ENCODE measurements at regions of chrX and their contacts with region 1.

Region 1: GRCh38 chrX:41802958-41803357 is 79.0 kb downstream of the GPR82 start:
- DNase-seq: no peak
- ATAC-seq: no peak
- H3K4me3 ChIP-seq: no peak overlapping the region
- H3K4me3 Mint-ChIP-seq: no peak overlapping the region
- H3K27ac ChIP-seq: no peak overlapping the region
- H3K27ac Mint-ChIP-seq: peak overlapping the region in 1 of 9 donors; percentile 3
- H3K4me1 ChIP-seq: peaks cover 0 to 3% of the 10 kb centered on the region in 2 donors
- H3K4me1 Mint-ChIP-seq: peaks cover 5 to 45% (median 16%) of the 10 kb centered on the region in 7 donors
- H3K27me3 ChIP-seq: no peaks in the 10 kb centered on the region
- H3K27me3 Mint-ChIP-seq: no peaks in the 10 kb centered on the region

Region 2: DNA sequence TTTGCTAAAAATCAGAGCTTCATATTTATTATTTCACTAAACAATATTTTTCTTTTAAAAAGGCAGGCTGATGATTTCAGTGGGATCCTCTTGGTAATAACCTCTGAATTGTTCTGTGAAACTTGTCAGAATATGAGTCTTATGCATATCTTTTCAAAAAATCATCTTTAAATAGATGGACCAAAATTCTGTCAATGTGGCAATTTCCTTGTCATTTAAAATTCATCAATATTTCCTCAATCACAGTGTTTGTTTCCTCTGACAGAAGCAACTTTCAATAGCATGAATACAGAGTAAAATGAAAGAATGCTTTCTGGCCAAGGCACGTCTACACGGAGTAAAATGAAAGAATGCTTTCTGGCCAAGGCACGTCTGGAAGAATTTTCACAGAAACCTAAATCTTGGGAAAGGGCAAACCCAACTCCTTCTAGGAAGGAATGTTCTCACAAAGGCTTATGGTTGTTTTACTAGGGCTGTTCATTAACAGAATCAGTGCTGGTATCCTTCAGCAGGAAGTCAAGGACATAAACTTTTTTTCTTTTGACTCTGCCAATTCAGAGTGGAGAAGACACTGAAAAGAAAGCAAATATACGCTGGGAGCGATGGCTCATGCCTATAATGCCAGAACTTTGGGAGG is 213.2 kb before region 1 on chrX:
- CTCF ChIA-PET with region 1: no interaction called
- POLR2A ChIA-PET with region 1: no interaction called
- intact Hi-C with region 1: no loop called
- DNase-seq: no peak
- ATAC-seq: no peak
- H3K4me3 ChIP-seq: no peak overlapping the region
- H3K4me3 Mint-ChIP-seq: no peak overlapping the region
- H3K27ac ChIP-seq: no peak overlapping the region
- H3K27ac Mint-ChIP-seq: no peak overlapping the region
- H3K4me1 ChIP-seq: no peaks in the 10 kb centered on the region
- H3K4me1 Mint-ChIP-seq: no peaks in the 10 kb centered on the region
- H3K27me3 ChIP-seq: no peaks in the 10 kb centered on the region
- H3K27me3 Mint-ChIP-seq: no peaks in the 10 kb centered on the region

Region 3: DNA sequence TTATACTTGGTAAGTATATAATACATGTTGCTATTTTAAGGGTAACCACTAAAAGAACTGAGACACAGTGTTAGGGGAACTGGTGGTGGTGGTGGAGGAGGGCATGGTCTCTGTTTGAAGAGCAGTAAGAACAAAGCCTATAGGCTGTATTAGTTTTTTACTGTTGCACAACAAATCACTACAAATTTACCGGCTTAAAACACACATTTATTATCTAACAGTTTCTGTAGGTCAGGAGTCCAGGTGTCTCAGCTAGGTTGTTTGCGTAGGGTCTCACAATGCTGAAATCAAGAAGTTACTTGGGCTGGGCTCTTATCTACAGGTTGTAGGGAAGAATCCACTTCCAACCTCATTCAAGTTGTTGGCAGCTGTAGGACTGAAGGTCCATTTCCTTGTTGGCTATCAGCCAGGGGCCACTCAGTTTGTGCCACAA is 67.8 kb after region 1 on chrX:
- CTCF ChIA-PET with region 1: no interaction called
- POLR2A ChIA-PET with region 1: no interaction called
- intact Hi-C with region 1: no loop called
- DNase-seq: no peak
- ATAC-seq: no peak
- H3K4me3 ChIP-seq: no peak overlapping the region
- H3K4me3 Mint-ChIP-seq: no peak overlapping the region
- H3K27ac ChIP-seq: no peak overlapping the region
- H3K27ac Mint-ChIP-seq: no peak overlapping the region
- H3K4me1 ChIP-seq: peaks cover 8 to 13% of the 10 kb centered on the region in 2 donors
- H3K4me1 Mint-ChIP-seq: peaks cover 10 to 74% (median 52%) of the 10 kb centered on the region in 7 donors
- H3K27me3 ChIP-seq: no peaks in the 10 kb centered on the region
- H3K27me3 Mint-ChIP-seq: no peaks in the 10 kb centered on the region

Region 4: DNA sequence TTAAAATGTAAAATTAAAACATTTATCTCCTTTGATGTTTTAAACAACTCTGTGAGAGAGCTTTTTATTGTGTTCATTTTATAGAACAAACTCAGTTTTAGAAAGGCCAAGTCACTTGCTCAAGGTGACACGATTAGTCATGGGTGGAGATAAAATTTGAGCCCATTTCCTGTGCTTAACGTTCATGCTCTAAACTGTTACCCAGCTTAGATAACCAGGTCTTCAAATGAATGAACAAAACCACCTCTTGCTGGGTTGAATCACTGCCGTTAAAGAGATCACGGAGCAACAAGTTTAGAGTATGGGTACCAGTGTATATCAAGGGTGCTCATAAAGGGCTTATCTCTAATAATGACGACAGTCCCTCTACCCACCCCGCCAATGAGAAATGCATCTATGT is 130.6 kb after region 1 on chrX:
- CTCF ChIA-PET with region 1: no interaction called
- POLR2A ChIA-PET with region 1: no interaction called
- intact Hi-C with region 1: no loop called
- DNase-seq: no peak
- ATAC-seq: no peak
- H3K4me3 ChIP-seq: no peak overlapping the region
- H3K4me3 Mint-ChIP-seq: no peak overlapping the region
- H3K27ac ChIP-seq: no peak overlapping the region
- H3K27ac Mint-ChIP-seq: no peak overlapping the region
- H3K4me1 ChIP-seq: peaks cover 0 to 7% of the 10 kb centered on the region in 2 donors
- H3K4me1 Mint-ChIP-seq: peaks cover 0 to 13% (median 7%) of the 10 kb centered on the region in 7 donors
- H3K27me3 ChIP-seq: no peaks in the 10 kb centered on the region
- H3K27me3 Mint-ChIP-seq: peaks cover 0 to 8% (median 0%) of the 10 kb centered on the region in 5 donors

Region 5: DNA sequence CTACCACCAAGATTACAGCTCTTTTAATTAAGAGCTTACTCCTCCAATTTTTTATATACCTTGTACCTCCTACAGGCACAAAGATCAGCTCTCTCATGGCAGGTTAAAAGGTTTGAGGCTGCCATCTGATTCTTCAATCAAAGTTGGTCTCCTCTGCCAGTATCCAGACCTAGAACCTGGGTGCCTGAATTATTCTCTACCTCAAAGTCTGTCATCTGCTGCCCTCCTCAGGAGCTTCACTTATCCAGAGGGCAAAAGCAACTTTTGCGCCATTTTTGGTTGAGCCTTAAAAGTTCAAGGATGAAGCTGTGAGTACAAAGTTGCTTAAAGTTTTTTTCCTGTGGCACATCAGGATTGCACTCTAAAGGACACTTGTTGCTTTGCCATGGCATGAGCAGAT is 1318.7 kb after region 1 on chrX:
- CTCF ChIA-PET with region 1: interaction called, 9 read pairs
- POLR2A ChIA-PET with region 1: no interaction called
- intact Hi-C with region 1: loop called in 1 of 2 experiments (anchors 1 kb)
- DNase-seq: peak in 5 of 9 donors; percentile 1 to 27 (median 15)
- ATAC-seq: no peak
- H3K4me3 ChIP-seq: no peak overlapping the region
- H3K4me3 Mint-ChIP-seq: no peak overlapping the region
- H3K27ac ChIP-seq: no peak overlapping the region
- H3K27ac Mint-ChIP-seq: peak overlapping the region in 1 of 9 donors; percentile 17
- H3K4me1 ChIP-seq: no peaks in the 10 kb centered on the region
- H3K4me1 Mint-ChIP-seq: peaks cover 0 to 8% (median 3%) of the 10 kb centered on the region in 7 donors
- H3K27me3 ChIP-seq: no peaks in the 10 kb centered on the region
- H3K27me3 Mint-ChIP-seq: no peaks in the 10 kb centered on the region

Region 6: GRCh38 chrX:43333543-43333942 is 1530.6 kb after region 1 on chrX:
- CTCF ChIA-PET with region 1: interaction called, 4 read pairs
- POLR2A ChIA-PET with region 1: no interaction called
- intact Hi-C with region 1: loop called in 1 of 2 experiments (anchors 1 kb)
- DNase-seq: no peak
- ATAC-seq: no peak
- H3K4me3 ChIP-seq: no peak overlapping the region
- H3K4me3 Mint-ChIP-seq: no peak overlapping the region
- H3K27ac ChIP-seq: no peak overlapping the region
- H3K27ac Mint-ChIP-seq: no peak overlapping the region
- H3K4me1 ChIP-seq: peaks cover 0 to 3% of the 10 kb centered on the region in 2 donors
- H3K4me1 Mint-ChIP-seq: no peaks in the 10 kb centered on the region
- H3K27me3 ChIP-seq: no peaks in the 10 kb centered on the region
- H3K27me3 Mint-ChIP-seq: no peaks in the 10 kb centered on the region